ENCODE measurements at regions of chr2 and their contacts with region 1.

Region 1: DNA sequence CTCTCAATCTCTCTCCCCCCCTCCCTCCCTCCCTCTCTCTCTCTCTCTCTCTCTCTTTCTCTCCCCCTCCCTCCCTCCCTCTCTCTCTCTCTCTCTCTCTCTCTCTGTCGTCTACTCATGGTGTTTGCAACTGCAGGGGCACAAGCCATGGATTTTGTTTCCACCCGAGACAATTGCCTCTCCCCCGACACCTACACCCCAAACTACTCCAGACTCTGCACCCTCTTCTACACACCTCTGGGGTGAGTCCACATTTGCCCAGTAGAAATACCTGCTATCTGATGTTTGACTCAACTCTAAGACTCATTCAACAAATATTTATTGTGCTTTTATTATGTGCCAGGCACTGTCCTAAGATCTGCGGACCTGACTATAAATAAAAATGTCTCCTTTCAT is 93.7 kb downstream of the TMEM17 start:
- DNase-seq: no peak
- H3K4me3 ChIP-seq: no peak overlapping the region
- CTCF ChIP-seq: no peak
- POLR2A ChIP-seq: no peak

Region 2: DNA sequence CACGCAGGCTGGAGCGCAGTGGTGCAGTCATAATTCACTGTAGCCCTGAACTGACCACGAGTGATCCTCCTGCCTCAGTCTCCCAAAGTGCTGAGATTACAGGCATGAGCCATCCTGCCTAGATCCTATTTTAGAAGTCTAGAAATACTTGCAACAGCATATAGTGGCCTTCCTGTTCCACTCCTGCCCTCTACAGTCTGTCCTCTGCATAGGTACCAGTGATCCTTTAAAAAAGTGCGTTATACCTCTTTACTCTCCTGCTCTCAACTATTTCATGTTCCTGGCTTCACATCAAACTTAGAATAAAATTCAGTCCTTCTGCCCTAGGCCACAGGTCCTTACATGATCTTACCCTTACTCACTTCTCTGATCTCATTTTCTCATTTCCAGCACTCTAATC is 500.8 kb before region 1 on chr2:
- intact Hi-C with region 1: loop called (anchors 2 kb)
- DNase-seq: peak in 1 of 2 donors; percentile 26
- H3K4me3 ChIP-seq: no peak overlapping the region
- CTCF ChIP-seq: no peak
- POLR2A ChIP-seq: no peak

Measured in lower leg skin (tissue), 4 donors.